Natural killer cell (primary cell): ENCODE measurements at regions of chr7 and their contacts with region 1.

Region 1: GRCh38 chr7:139875821-139876241 is 46.8 kb downstream of the TBXAS1 start:
- DNase-seq: peak in 1 of 2 donors; percentile 56
- ATAC-seq: peak; percentile 66 to 80 (median 79)
- H3K4me3 ChIP-seq: no peak overlapping the region
- H3K4me3 Mint-ChIP-seq: peak overlapping the region; percentile 74
- H3K27ac ChIP-seq: peak overlapping the region; percentile 88
- H3K27ac Mint-ChIP-seq: peak overlapping the region; percentile 83
- H3K4me1 ChIP-seq: peaks cover 48% of the 10 kb centered on the region
- H3K4me1 Mint-ChIP-seq: peaks cover 73 to 81% of the 10 kb centered on the region in 2 donors
- H3K27me3 ChIP-seq: no peaks in the 10 kb centered on the region
- H3K27me3 Mint-ChIP-seq: no peaks in the 10 kb centered on the region
- CTCF ChIP-seq: no peak

Region 2: GRCh38 chr7:139855498-139856270 is 20.1 kb before region 1 on chr7:
- intact Hi-C with region 1: loop called (anchors 2 kb)
- DNase-seq: peak in 1 of 2 donors; percentile 33
- ATAC-seq: peak; percentile 58 to 79 (median 60)
- H3K4me3 ChIP-seq: no peak overlapping the region
- H3K4me3 Mint-ChIP-seq: peak overlapping the region; percentile 72
- H3K27ac ChIP-seq: peak overlapping the region; percentile 79
- H3K27ac Mint-ChIP-seq: peak overlapping the region; percentile 87 to 90
- H3K4me1 ChIP-seq: peaks cover 58% of the 10 kb centered on the region
- H3K4me1 Mint-ChIP-seq: peaks cover 65 to 77% of the 10 kb centered on the region in 2 donors
- H3K27me3 ChIP-seq: no peaks in the 10 kb centered on the region
- H3K27me3 Mint-ChIP-seq: no peaks in the 10 kb centered on the region
- CTCF ChIP-seq: no peak

Region 3: DNA sequence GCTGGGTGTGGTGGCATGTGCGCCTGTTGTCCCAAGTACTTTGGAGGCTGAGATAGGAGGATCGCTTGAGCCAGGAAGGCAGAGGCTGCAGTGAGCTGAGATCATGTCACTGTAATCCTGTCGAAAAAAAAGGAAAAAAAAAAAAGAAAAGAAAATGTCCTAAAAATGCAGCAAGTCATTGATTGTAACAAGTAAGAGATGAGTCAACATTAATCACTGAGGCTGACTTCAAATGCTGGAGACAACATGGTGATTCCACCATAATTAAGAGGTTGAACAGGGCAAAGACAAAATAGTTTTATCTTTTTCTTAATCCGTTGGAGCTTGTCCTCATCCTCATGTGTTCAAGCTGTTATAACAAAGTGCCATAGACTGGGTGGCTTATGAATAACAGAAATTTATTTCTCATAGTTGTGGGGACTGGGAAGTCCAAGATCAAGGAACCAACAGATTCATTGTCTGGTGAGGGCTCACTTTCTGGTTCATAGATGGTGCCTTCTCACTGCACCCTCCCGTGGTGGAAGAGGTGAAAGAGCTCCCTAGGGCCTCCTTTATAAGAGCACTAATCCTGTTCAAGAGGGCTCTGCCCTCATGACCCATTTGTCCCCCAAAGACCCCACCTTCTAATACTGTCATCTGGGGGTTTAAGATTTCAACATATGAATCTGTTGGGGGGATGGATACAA is 13.5 kb after region 1 on chr7:
- intact Hi-C with region 1: loop called (anchors 1 kb)
- DNase-seq: no peak
- ATAC-seq: no peak
- H3K4me3 ChIP-seq: no peak overlapping the region
- H3K4me3 Mint-ChIP-seq: no peak overlapping the region
- H3K27ac ChIP-seq: no peak overlapping the region
- H3K27ac Mint-ChIP-seq: peak overlapping the region; percentile 92 to 94
- H3K4me1 ChIP-seq: peaks cover 22% of the 10 kb centered on the region
- H3K4me1 Mint-ChIP-seq: peaks cover 57 to 60% of the 10 kb centered on the region in 2 donors
- H3K27me3 ChIP-seq: no peaks in the 10 kb centered on the region
- H3K27me3 Mint-ChIP-seq: no peaks in the 10 kb centered on the region
- CTCF ChIP-seq: no peak

Region 4: DNA sequence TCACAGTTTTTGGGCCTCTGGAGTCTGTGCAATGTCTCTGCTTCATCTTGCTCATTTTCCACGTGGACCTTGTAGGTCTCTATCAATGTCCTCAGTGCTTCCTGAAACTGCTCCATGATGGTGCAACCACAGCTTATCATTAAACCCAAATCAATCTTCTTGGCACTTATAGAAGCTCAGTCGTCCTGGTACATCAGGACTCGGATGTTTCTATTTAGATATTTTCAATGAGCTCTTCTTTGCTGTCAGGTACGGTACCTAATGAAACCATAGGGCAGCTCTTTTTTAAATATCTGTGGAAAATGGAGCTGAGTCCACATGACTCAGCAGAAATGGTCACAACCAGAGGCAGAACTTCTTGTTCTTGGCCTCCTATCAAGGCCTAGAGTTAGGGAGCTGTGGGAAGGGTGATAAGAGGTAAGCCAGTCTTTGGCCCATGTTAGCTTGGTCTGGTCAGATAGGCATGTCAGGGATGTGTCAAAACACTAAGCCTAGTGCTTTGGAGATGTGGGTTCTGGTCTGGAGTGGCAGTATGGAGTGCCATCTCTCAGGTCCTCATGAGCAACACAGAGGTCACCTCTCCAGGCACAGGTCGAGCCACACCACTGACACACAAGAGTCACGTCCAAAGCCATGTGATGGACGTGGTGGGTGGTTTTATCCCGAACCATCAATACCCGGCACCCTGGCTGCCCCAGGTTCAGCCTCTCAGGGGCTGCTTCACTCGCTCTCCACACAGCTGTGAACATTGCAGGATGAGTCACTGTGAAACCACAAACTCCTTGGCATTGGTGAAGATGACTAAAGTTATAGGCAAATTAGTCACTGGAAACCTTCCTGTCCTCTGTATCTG is 40.3 kb after region 1 on chr7:
- intact Hi-C with region 1: loop called (anchors 1 kb)
- DNase-seq: peak; percentile 49 to 69
- ATAC-seq: peak; percentile 86 to 93 (median 87)
- H3K4me3 ChIP-seq: no peak overlapping the region
- H3K4me3 Mint-ChIP-seq: peak overlapping the region; percentile 37
- H3K27ac ChIP-seq: peak overlapping the region; percentile 30
- H3K27ac Mint-ChIP-seq: peak overlapping the region; percentile 86 to 91
- H3K4me1 ChIP-seq: peaks cover 33% of the 10 kb centered on the region
- H3K4me1 Mint-ChIP-seq: peaks cover 44 to 58% of the 10 kb centered on the region in 2 donors
- H3K27me3 ChIP-seq: no peaks in the 10 kb centered on the region
- H3K27me3 Mint-ChIP-seq: no peaks in the 10 kb centered on the region
- CTCF ChIP-seq: no peak